Activated CD4-positive, alpha-beta T cell treated with anti-CD3 and anti-CD28 coated beads for 36 hours (primary cell): ENCODE measurements at regions of chr19 and their contacts with region 1.

Region 1: GRCh38 chr19:860481-861101 is 1.1 kb downstream of the CFD start:
- DNase-seq: peak; percentile 73
- ATAC-seq: peak; percentile 17
- H3K4me3 Mint-ChIP-seq: no peak overlapping the region
- H3K27ac Mint-ChIP-seq: no peak overlapping the region
- H3K4me1 Mint-ChIP-seq: peaks cover 13% of the 10 kb centered on the region
- H3K27me3 Mint-ChIP-seq: peaks cover 13% of the 10 kb centered on the region

Region 2: DNA sequence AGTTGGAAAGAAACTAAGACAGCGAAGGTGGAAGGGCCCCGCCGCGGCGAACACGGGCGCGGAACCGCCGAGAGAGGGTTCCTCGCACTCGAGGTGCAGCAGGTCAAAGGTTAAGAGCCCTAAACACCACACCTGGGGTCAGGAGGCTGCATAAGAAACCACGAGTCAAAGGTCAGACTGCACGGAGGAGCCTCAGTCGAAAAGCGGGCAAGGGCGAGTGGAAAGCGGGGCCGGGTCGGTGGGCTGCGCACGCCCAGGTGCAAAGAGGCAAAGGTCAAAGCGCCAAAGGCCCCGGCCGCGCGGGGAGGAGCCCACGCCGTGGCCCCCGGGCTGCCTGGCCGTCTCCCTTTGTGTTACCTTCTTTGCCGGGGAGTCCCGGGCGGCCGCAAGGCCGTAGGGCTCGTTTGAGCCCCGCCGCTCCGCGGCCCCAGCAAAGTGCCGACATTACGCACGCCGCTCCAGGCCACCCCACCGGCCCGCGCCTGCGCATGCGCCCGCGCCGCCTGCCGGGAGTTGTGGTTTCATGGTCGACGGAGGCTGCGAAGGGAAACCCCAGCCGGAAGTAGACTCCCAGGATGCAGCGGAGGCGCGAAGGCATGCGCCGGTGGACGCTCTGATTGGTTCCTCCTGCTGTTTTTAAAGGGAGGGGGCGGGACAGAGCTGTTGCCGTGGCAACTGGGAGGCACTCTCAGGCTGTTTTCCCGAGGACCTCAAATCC is 227.4 kb before region 1 on chr19 and contains the start of gene POLRMT:
- CTCF ChIA-PET with region 1: no interaction called
- POLR2A ChIA-PET with region 1: no interaction called
- intact Hi-C with region 1: loop called in 1 of 2 experiments (anchors 1 kb)
- DNase-seq: peak; percentile 98
- ATAC-seq: peak; percentile 98
- H3K4me3 Mint-ChIP-seq: peak within 1 kb of the TSS; percentile 97
- H3K27ac Mint-ChIP-seq: peak within 1 kb of the TSS; percentile 91
- H3K4me1 Mint-ChIP-seq: peaks cover 29% of the 10 kb centered on the region
- H3K27me3 Mint-ChIP-seq: no peaks in the 10 kb centered on the region
- total RNA-seq, gene POLRMT: 69.0 to 77.4 TPM

Region 3: GRCh38 chr19:771332-771785 is 89.2 kb before region 1 on chr19:
- CTCF ChIA-PET with region 1: interaction called, 5 read pairs
- POLR2A ChIA-PET with region 1: no interaction called
- intact Hi-C with region 1: loop called (anchors 1 to 10 kb)
- DNase-seq: peak; percentile 73
- ATAC-seq: peak; percentile 76
- H3K4me3 Mint-ChIP-seq: no peak overlapping the region
- H3K27ac Mint-ChIP-seq: no peak overlapping the region
- H3K4me1 Mint-ChIP-seq: peaks cover 2% of the 10 kb centered on the region
- H3K27me3 Mint-ChIP-seq: no peaks in the 10 kb centered on the region

Region 4: DNA sequence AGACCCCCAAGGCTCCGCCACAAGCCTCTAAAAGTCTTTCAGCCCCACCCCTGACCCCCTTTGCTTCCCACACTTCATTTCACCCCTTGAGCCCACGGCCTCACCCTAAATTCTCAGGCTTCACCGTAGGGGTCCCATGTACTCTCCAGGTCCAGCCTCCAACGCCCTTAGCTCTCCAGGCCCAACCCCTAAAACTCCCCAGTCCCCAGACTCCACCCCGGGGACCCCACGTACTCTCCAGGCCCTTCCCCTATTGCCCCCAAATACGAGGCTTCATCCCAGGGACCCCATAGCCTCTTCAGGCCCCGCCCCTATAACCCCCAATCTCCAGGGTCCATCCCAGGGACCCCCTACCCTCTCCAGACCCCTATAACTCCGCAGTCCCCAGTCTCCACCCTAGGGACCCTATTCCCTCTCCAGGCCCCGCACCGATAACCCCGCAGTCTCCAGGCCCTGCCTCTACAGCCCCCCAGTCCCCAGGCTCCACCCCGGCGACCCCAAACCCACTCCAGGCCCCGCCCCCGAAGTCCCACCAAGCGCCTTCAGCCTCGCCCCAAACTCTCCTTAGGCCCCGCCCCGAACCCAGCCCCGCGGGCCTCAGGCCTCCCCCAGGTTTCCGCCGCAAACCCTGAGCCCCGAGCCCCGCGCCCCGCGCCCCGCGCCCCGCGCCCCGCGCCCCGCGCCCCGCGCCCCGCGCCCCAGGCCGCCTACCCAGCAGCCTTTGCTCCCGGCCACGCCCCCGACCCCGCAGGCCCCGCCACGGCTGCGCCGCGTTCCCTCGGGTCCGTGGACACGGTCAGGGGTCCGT is 31.9 kb after region 1 on chr19:
- CTCF ChIA-PET with region 1: interaction called, 6 read pairs
- POLR2A ChIA-PET with region 1: interaction called, 10 read pairs
- intact Hi-C with region 1: loop called in 1 of 2 experiments (anchors 1 kb)
- DNase-seq: peak; percentile 33
- ATAC-seq: peak; percentile 37
- H3K4me3 Mint-ChIP-seq: peak overlapping the region; percentile 78
- H3K27ac Mint-ChIP-seq: peak overlapping the region; percentile 77
- H3K4me1 Mint-ChIP-seq: peaks cover 13% of the 10 kb centered on the region
- H3K27me3 Mint-ChIP-seq: no peaks in the 10 kb centered on the region

Region 5: DNA sequence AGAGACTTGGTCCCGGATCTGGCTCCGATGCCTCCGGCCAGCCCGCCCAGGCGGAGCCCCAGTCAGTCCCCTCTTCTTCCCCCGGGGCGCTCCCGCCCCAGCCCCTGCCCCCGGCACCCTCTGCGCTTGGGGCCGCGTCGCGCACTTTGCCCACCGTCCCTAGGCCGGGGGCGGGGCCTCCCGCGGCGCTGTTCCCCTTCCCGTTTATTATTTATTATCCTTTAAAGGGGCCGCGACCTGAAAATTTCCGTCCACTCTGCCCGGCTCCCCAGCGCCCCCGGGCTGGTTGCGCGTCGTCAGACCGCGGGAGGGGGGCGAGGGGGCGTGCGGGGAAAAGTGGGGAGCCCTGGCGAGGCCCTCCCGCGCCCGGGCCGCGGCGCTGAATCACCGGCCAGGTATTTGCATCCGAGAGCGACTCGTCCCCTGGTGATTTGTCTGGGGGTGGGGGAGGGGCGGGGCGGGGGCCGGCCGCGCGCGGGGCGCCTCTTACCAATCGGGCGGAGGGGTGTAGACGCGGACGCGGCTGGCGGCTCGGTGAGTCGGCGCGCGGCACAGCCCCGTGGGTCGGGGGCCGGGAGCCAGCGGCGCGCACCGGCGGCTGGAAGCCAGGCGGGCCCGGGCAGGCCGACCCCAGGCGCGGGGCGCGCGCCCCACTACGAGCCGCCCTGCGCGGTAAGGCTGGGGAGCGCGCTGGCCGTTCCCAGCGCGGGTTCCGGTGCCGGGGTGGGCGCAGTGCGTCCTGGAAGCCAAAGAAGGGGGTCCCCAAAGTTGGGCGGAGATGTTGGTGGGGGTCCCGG is 65.1 kb after region 1 on chr19 and contains the start of gene ARID3A:
- CTCF ChIA-PET with region 1: interaction called, 7 read pairs
- POLR2A ChIA-PET with region 1: no interaction called
- intact Hi-C with region 1: loop called (anchors 1 kb)
- DNase-seq: peak; percentile 85
- ATAC-seq: peak; percentile 42
- H3K4me3 Mint-ChIP-seq: peak within 1 kb of the TSS; percentile 70
- H3K27ac Mint-ChIP-seq: peak within 1 kb of the TSS; percentile 37
- H3K4me1 Mint-ChIP-seq: peaks cover 17% of the 10 kb centered on the region
- H3K27me3 Mint-ChIP-seq: no peaks in the 10 kb centered on the region
- total RNA-seq, gene ARID3A: 25.1 to 36.0 TPM

Region 6: DNA sequence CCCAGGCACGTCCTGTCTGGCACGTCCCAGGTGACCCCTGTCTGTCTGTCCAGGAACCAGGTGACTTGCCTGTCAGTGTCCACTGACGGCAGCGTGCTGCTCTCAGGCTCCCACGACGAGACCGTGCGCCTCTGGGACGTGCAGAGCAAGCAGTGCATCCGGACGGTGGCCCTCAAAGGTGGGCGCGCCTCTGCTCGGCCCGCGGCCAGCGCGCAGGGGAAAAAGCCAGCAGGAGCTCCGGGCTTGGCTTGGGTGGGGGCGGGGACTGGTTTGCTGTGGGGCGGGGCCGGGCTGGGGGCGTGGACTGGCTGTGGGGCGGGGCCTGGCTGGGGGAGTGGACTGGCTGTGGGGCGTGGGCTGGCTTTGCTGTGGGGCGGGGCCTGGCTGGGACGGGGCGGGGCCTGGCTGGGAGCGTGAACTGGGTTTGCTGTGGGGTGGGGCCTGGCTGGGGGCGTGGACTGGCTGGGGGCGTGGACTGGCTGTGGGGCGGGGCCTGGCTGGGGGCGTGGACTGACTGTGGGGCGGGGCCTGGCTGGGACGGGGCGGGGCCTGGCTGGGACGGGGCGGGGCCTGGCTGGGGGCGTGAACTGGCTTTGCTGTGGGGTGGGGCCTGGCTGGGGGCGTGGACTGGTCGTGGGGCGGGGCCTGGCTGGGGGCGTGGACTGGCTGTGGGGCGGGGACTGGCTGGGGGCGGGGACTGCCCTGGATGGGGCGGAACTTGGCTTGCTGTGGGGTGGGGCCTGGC is 130.8 kb after region 1 on chr19:
- CTCF ChIA-PET with region 1: interaction called, 8 read pairs
- POLR2A ChIA-PET with region 1: no interaction called
- intact Hi-C with region 1: loop called in 1 of 2 experiments (anchors 1 kb)
- DNase-seq: peak; percentile 91
- ATAC-seq: peak; percentile 80
- H3K4me3 Mint-ChIP-seq: no peak overlapping the region
- H3K27ac Mint-ChIP-seq: no peak overlapping the region
- H3K4me1 Mint-ChIP-seq: peaks cover 2% of the 10 kb centered on the region
- H3K27me3 Mint-ChIP-seq: no peaks in the 10 kb centered on the region

Region 7: GRCh38 chr19:1064661-1065605 is 204.3 kb after region 1 on chr19:
- CTCF ChIA-PET with region 1: no interaction called
- POLR2A ChIA-PET with region 1: no interaction called
- intact Hi-C with region 1: loop called in 1 of 2 experiments (anchors 1 kb)
- DNase-seq: peak; percentile 86
- ATAC-seq: peak; percentile 48
- H3K4me3 Mint-ChIP-seq: no peak overlapping the region
- H3K27ac Mint-ChIP-seq: no peak overlapping the region
- H3K4me1 Mint-ChIP-seq: peaks cover 33% of the 10 kb centered on the region
- H3K27me3 Mint-ChIP-seq: no peaks in the 10 kb centered on the region

Region 8: GRCh38 chr19:1154731-1155351 is 294.2 kb after region 1 on chr19:
- CTCF ChIA-PET with region 1: no interaction called
- POLR2A ChIA-PET with region 1: no interaction called
- intact Hi-C with region 1: no loop called
- DNase-seq: no peak
- ATAC-seq: no peak
- H3K4me3 Mint-ChIP-seq: no peak overlapping the region
- H3K27ac Mint-ChIP-seq: no peak overlapping the region
- H3K4me1 Mint-ChIP-seq: no peaks in the 10 kb centered on the region
- H3K27me3 Mint-ChIP-seq: no peaks in the 10 kb centered on the region